SK-N-SH (cell line): ENCODE measurements at regions of chr7 and their contacts with region 1.

Region 1: GRCh38 chr7:135335628-135336139 is 102.0 kb downstream of the STRA8 start:
- DNase-seq: peak; percentile 86
- H3K4me3 ChIP-seq: no peak overlapping the region
- H3K27ac ChIP-seq: no peak overlapping the region
- H3K4me1 ChIP-seq: peaks cover 0 to 15% of the 10 kb centered on the region in 2 experiments; a peak in 1 of 4 replicates
- H3K27me3 ChIP-seq: no peaks in the 10 kb centered on the region
- CTCF ChIP-seq: peak; percentile 60
- EP300 ChIP-seq: no peak
- RAD21 ChIP-seq: peak; percentile 99

Region 2: DNA sequence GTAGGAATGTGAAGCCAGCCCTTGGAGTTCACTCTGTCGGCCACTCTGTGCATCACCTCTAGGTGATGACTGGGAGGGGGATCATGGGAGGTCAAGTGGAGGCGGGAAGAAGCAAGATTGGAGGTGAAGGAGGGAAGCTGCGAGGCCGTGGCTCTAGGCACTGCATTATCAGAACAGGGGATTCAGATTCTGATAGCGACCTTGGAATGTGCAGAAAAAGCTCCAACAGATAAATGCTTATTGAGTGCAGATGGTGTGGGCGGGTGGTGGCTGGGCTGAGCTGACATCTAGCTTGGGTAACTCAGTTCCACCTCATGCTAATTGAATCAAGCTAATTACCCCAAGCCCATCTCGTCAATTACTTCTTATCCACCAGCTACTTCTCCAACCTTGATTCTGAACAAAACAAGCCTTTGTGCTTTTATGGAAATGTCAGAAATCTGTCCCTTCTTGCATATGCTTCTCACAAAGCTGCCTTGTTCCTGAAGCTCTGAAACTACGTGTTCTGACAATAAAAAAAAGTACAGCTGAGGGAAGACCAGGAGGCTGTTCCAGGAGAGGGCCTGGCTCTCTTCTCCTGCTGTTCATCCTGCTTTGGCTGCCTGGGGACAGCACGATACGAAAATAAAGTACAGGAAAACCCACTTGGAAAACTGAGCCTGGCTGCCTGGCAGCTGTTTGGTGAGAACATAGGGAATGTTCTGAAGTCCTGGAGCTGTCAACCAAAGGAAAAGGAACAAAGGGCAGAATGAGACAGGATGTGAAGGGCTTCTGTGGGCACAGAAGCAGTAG is 74.6 kb before region 1 on chr7:
- CTCF ChIA-PET with region 1: interaction called, 17 read pairs
- POLR2A ChIA-PET with region 1: no interaction called
- DNase-seq: peak; percentile 57
- H3K4me3 ChIP-seq: no peak overlapping the region
- H3K27ac ChIP-seq: no peak overlapping the region
- H3K4me1 ChIP-seq: peaks cover 0 to 14% of the 10 kb centered on the region in 2 experiments; a peak in 1 of 4 replicates
- H3K27me3 ChIP-seq: no peaks in the 10 kb centered on the region
- CTCF ChIP-seq: no peak
- EP300 ChIP-seq: no peak
- RAD21 ChIP-seq: no peak

Region 3: DNA sequence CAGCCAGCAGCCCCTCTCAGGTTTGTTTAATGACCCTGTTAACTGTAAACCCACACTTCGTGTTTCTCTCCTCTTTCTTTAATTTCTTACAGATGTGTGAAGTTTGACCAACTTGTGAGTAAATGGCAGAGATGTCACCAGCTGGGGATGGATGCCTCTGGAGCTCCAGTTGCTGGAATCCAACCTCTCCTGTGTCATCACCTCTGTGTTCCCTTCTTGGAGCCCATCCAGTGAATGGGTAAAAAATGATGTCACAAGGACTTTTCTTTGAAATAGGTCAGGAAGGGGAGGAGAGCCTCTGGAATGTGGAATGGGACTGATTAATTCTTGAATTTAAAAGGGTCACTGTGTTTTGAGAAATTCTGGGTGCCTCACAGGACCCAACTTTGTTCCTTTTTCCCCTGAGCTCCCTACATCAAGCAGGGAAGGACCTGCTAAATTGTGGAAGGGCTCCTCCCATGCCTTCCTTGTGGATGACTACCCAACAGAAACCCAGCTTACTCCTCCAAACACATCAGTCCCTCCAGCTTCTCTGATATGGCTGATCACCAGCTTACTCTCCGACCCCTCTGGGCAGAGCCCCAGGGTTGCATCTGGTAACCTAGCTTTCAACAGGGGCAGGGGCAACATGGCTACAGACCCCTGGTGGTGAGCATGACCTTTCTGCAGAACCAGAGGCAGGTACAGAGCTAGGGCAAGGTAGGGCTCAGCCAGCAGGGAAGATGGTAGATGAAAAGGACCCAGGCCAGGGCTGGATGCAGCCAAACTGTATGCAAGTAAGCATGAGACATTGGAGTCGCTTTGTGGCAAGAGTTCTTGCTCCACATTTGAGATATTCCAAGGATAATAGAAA is 34.5 kb before region 1 on chr7:
- CTCF ChIA-PET with region 1: interaction called, 26 read pairs
- POLR2A ChIA-PET with region 1: no interaction called
- DNase-seq: no peak
- H3K4me3 ChIP-seq: no peak overlapping the region
- H3K27ac ChIP-seq: no peak overlapping the region
- H3K4me1 ChIP-seq: peaks cover 0 to 6% of the 10 kb centered on the region in 2 experiments; a peak in 1 of 4 replicates
- H3K27me3 ChIP-seq: 0 out of 2 replicates have a peak, but pooled peaks cover 3% of the 10 kb centered on the region
- CTCF ChIP-seq: no peak
- EP300 ChIP-seq: no peak
- RAD21 ChIP-seq: no peak

Region 4: DNA sequence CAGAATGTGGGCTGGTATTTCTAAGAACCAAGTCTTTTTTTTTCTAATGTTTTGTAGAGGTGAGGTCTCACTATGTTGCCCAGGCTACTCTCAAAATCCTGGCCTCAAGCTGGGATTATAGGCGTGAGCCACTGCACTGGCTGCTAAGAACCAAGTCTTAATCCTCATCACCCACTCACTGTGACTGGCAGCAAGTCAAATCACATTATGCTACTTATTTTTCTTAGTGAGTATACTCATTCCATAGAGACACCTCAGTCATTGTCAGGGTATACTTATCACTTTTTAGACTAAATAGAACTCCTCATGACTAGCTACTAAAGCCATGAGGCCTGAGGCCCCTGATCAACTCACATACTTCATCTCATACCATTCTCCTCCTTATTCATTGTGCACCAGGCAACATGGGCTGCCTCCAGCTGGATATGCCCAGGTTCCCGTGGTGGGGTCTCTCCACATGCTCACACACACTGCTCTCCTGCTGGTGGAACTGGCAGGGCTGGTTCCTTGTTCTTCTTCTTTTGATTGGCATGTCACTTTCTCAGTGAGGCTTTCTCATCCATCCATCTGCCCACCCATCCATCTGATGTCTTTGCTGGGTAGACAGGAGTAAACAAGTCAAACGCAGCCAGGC is 14.2 kb after region 1 on chr7:
- CTCF ChIA-PET with region 1: interaction called, 41 read pairs
- POLR2A ChIA-PET with region 1: no interaction called
- DNase-seq: no peak
- H3K4me3 ChIP-seq: no peak overlapping the region
- H3K27ac ChIP-seq: no peak overlapping the region
- H3K4me1 ChIP-seq: no peaks in the 10 kb centered on the region
- H3K27me3 ChIP-seq: no peaks in the 10 kb centered on the region
- CTCF ChIP-seq: no peak
- EP300 ChIP-seq: no peak
- RAD21 ChIP-seq: no peak

Region 5: DNA sequence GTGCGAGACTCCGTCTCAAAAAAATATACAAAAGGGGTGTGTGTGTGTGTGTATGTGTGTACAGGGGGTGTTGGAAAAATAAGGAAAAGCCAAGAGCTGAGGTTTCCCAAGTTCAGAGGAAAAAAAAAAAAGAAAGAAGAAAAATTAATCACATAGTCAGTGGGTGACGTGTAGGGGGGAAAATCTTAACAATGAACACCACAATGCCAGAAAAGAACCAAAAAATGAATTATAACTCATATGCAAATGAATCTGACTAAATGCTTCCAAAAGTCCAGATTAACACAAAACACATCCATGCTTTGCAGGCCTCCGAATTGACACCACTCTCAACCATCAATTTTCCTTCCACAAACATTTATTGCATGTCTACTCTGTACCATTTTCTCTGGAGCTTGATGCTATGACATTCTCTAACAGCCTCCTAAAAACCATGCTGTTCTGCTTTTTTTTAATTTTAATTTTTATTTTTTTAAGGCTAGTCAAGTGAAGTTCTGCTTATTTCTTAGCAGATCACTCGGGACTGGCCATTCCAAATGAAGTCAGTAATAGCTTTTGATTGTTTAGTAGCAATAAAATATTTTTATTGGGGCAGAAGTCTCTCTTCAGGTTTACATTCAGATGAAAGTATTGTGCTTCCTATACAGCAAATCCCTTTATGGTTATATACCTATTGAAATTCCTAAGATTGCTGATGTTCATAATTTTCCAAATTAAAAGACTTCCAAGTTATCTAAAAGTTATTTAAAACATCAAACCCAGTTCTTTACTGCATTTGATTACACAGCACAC is 40.4 kb after region 1 on chr7:
- CTCF ChIA-PET with region 1: interaction called, 13 read pairs
- POLR2A ChIA-PET with region 1: no interaction called
- DNase-seq: no peak
- H3K4me3 ChIP-seq: no peak overlapping the region
- H3K27ac ChIP-seq: no peak overlapping the region
- H3K4me1 ChIP-seq: no peaks in the 10 kb centered on the region
- H3K27me3 ChIP-seq: no peaks in the 10 kb centered on the region
- CTCF ChIP-seq: no peak
- EP300 ChIP-seq: no peak
- RAD21 ChIP-seq: no peak

Region 6: GRCh38 chr7:135558337-135558767 is 222.7 kb after region 1 on chr7:
- CTCF ChIA-PET with region 1: interaction called, 16 read pairs
- POLR2A ChIA-PET with region 1: no interaction called
- DNase-seq: peak; percentile 84
- H3K4me3 ChIP-seq: peak overlapping the region; percentile 83 to 92
- H3K27ac ChIP-seq: peak overlapping the region; percentile 85 to 97
- H3K4me1 ChIP-seq: peaks cover 0 to 3% of the 10 kb centered on the region in 2 experiments; a peak in 2 of 4 replicates
- H3K27me3 ChIP-seq: no peaks in the 10 kb centered on the region
- CTCF ChIP-seq: peak; percentile 80
- EP300 ChIP-seq: no peak
- RAD21 ChIP-seq: peak; percentile 70